Caco-2 (cell line): ENCODE measurements at regions of chr17 and their contacts with region 1.

Region 1: GRCh38 chr17:6640536-6641373 is at the starts of genes KIAA0753 and TXNDC17:
- DNase-seq: peak; percentile 81 to 83
- H3K4me3 ChIP-seq: peak within 1 kb of the TSS; percentile 71
- H3K4me3 Mint-ChIP-seq: peak within 1 kb of the TSS; percentile 91
- H3K27ac Mint-ChIP-seq: peak within 1 kb of the TSS; percentile 95
- H3K4me1 ChIP-seq: no peaks in the 10 kb centered on the region
- H3K4me1 Mint-ChIP-seq: no peaks in the 10 kb centered on the region
- H3K27me3 ChIP-seq: no peaks in the 10 kb centered on the region
- H3K27me3 Mint-ChIP-seq: no peaks in the 10 kb centered on the region
- CTCF ChIP-seq: no peak
- total RNA-seq, gene KIAA0753: 7.7 and 9.8 TPM in 2 replicates
- total RNA-seq, gene TXNDC17: 59.1 and 68.6 TPM in 2 replicates

Region 2: DNA sequence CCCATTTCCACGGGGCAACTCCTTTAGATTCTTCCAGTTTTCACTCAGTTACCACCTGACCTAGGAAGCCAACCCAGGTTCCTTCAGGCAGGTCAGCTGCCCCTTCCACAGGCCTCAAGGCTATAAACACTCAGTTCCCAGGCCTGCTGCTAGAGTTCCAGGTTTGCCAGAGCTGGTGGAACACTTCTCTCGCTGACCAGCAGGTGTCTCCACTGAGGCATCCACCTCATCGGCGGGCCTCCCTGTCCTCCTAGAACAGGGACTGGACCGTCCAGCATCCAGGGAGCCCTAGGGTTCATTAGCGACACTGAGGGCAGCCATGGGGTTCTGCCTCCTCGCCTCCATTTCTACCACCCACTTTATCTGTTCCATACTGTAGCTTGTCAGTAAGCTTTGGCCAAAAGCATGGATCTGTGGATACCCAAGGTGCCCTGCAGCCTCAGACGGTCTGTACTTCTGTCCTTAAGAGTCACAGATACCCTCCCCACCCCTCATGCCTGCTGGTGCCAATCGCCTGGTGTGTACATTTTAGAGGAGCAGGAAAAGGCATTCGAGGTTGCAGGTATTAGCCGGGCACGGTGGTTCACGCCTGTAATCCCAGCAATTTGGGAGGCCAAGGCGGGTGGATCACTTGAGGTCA is 167.5 kb before region 1 on chr17:
- CTCF ChIA-PET with region 1: no interaction called
- POLR2A ChIA-PET with region 1: no interaction called
- intact Hi-C with region 1: loop called (anchors 5 kb)
- DNase-seq: peak; percentile 68 to 70
- H3K4me3 ChIP-seq: no peak overlapping the region
- H3K4me3 Mint-ChIP-seq: no peak overlapping the region
- H3K27ac Mint-ChIP-seq: peak overlapping the region; percentile 17
- H3K4me1 ChIP-seq: no peaks in the 10 kb centered on the region
- H3K4me1 Mint-ChIP-seq: peaks cover 6% of the 10 kb centered on the region
- H3K27me3 ChIP-seq: no peaks in the 10 kb centered on the region
- H3K27me3 Mint-ChIP-seq: peaks cover 3% of the 10 kb centered on the region
- CTCF ChIP-seq: peak; percentile 74 to 78

Region 3: DNA sequence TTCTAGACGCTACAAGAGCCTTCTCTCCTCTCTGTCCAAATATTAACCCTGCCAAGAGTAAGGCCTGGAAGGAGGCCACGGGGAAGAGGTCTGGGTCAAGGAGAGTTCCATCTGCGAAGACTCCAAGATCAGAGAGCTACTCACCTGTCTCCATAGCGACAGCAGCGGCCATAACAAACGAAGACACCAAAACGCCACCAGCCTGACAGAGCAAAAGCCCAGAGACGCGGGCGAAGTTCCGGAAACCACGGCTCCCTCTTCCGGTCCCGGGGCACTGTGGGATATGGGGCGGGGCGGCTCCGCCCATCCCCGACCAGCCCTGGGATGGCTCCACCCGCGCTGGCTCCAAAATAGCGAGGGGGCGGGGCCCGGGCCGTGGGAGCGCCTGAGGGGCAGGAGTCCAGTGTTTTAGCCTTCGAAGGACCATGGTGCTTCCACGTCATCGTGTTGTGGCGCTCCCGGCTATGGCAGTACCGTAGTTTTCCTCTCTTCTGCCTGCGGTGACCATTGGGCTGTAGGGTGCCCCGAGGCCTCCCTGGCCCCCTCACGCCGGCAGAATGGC is 10.7 kb after region 1 on chr17 and contains the starts of genes C17orf100 and MED31:
- CTCF ChIA-PET with region 1: interaction called, 3 read pairs
- POLR2A ChIA-PET with region 1: interaction called, 6 read pairs
- intact Hi-C with region 1: loop called (anchors 1 kb)
- DNase-seq: peak; percentile 93 to 94
- H3K4me3 ChIP-seq: peak within 1 kb of the TSS; percentile 84
- H3K4me3 Mint-ChIP-seq: peak within 1 kb of the TSS; percentile 85
- H3K27ac Mint-ChIP-seq: peak within 1 kb of the TSS; percentile 97
- H3K4me1 ChIP-seq: no peaks in the 10 kb centered on the region; the same call in 1 of the 2 replicates
- H3K4me1 Mint-ChIP-seq: peaks cover 10% of the 10 kb centered on the region
- H3K27me3 ChIP-seq: no peaks in the 10 kb centered on the region
- H3K27me3 Mint-ChIP-seq: no peaks in the 10 kb centered on the region
- CTCF ChIP-seq: no peak
- total RNA-seq, gene C17orf100: 3.1 and 3.4 TPM in 2 replicates
- total RNA-seq, gene MED31: 9.5 and 10.2 TPM in 2 replicates

Region 4: DNA sequence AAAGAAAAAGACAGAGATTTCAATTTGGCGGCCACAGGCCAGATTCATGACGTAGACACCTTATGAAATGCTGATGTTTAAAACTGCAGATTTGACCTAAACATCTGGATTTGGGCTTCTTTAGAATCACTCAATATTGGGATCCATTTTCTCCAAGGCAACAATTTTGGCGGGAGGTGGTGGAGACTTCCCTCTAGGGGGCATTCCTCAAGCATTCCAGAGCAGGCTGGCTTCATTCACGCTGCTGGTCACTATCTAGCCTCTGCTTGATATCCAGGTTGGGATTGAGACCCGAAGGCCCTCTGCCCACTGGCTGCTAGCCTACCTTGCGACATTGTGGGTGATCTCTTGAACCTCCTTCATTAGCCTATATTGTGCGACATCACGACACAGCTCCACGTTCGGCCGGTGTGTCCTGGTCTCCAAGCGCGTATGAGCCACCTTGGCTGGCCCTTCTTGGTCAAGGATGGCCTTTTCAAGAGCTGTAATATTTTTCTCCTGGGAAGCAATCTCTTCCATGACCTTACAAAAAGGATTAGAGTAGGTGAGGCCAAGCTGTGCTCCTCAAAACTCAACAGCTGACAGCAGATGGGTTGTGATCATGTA is 159.8 kb after region 1 on chr17:
- CTCF ChIA-PET with region 1: no interaction called
- POLR2A ChIA-PET with region 1: no interaction called
- intact Hi-C with region 1: no loop called
- DNase-seq: no peak
- H3K4me3 ChIP-seq: no peak overlapping the region
- H3K4me3 Mint-ChIP-seq: no peak overlapping the region
- H3K27ac Mint-ChIP-seq: no peak overlapping the region
- H3K4me1 ChIP-seq: peaks cover 30% of the 10 kb centered on the region
- H3K4me1 Mint-ChIP-seq: no peaks in the 10 kb centered on the region
- H3K27me3 ChIP-seq: no peaks in the 10 kb centered on the region
- H3K27me3 Mint-ChIP-seq: no peaks in the 10 kb centered on the region
- CTCF ChIP-seq: no peak